ENCODE measurements at regions of chr2 and their contacts with region 1.

Region 1: GRCh38 chr2:219125886-219126270 is 34.7 kb downstream of the NHEJ1 start:
- DNase-seq: no peak
- H3K4me3 ChIP-seq: no peak overlapping the region
- H3K27ac ChIP-seq: no peak overlapping the region
- H3K4me1 ChIP-seq: peaks cover 42% of the 10 kb centered on the region
- H3K27me3 ChIP-seq: no peaks in the 10 kb centered on the region
- CTCF ChIP-seq: no peak

Region 2: GRCh38 chr2:218908721-218909619 is 216.9 kb before region 1 on chr2:
- CTCF ChIA-PET with region 1: no interaction called
- POLR2A ChIA-PET with region 1: no interaction called
- intact Hi-C with region 1: no loop called
- DNase-seq: peak; percentile 79 to 90
- H3K4me3 ChIP-seq: peak overlapping the region; percentile 67
- H3K27ac ChIP-seq: peak overlapping the region; percentile 59
- H3K4me1 ChIP-seq: peaks cover 15% of the 10 kb centered on the region
- H3K27me3 ChIP-seq: no peaks in the 10 kb centered on the region
- CTCF ChIP-seq: no peak

Region 3: GRCh38 chr2:219253753-219254590 is 128.1 kb after region 1 on chr2 and contains the start of gene TUBA4A:
- CTCF ChIA-PET with region 1: no interaction called
- POLR2A ChIA-PET with region 1: interaction called, 10 read pairs
- intact Hi-C with region 1: no loop called
- DNase-seq: peak; percentile 65 to 87
- H3K4me3 ChIP-seq: peak within 1 kb of the TSS; percentile 87
- H3K27ac ChIP-seq: peak within 1 kb of the TSS; percentile 43
- H3K4me1 ChIP-seq: peaks cover 46% of the 10 kb centered on the region
- H3K27me3 ChIP-seq: no peaks in the 10 kb centered on the region
- CTCF ChIP-seq: no peak
- total RNA-seq, gene TUBA4A: 118 and 157 TPM in 2 replicates

Region 4: GRCh38 chr2:219619235-219619634 is 493.4 kb after region 1 on chr2:
- CTCF ChIA-PET with region 1: no interaction called
- POLR2A ChIA-PET with region 1: no interaction called
- intact Hi-C with region 1: no loop called
- DNase-seq: no peak
- H3K4me3 ChIP-seq: no peak overlapping the region
- H3K27ac ChIP-seq: no peak overlapping the region
- H3K4me1 ChIP-seq: no peaks in the 10 kb centered on the region
- H3K27me3 ChIP-seq: no peaks in the 10 kb centered on the region
- CTCF ChIP-seq: no peak

Measured in PC-9 (cell line).